ENCODE measurements at regions of chr2 and their contacts with region 1.

Region 1: GRCh38 chr2:159175182-159175581 is 111.3 kb downstream of the WDSUB1 start:
- DNase-seq: no peak
- ATAC-seq: peak; percentile 36 to 77 (median 68)
- H3K4me3 ChIP-seq: no peak overlapping the region
- H3K27ac ChIP-seq: peak overlapping the region in 7 of 10 donors; percentile 7 to 63 (median 35)
- H3K4me1 ChIP-seq: peaks cover 0 to 38% (median 13%) of the 10 kb centered on the region in 9 donors
- H3K27me3 ChIP-seq: no peaks in the 10 kb centered on the region
- CTCF ChIP-seq: peak in 1 of 9 donors; percentile 21

Region 2: DNA sequence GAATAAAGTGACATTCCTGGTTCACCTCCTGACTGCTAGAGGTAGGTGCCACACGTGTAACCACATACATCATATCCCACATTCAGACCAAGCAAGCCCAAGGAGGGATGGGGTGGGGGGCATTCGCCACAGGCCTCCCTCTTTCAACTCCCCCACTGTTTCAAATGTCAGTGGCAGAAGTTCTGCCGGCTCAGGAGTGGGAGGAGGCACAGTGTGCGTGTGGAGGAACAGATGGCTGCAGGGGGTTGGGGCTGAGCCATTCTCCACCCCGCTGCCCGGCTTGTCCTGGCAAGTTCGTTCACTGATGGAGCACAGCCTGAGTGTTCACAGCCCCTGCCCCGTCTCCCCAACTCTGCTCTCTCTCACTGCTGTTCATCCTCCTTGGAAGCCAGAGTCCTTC is 282.2 kb before region 1 on chr2:
- intact Hi-C with region 1: loop called in 1 of 10 experiments (anchors 10 kb)
- DNase-seq: no peak
- ATAC-seq: peak in 4 of 8 donors; percentile 27 to 47 (median 30)
- H3K4me3 ChIP-seq: no peak overlapping the region
- H3K27ac ChIP-seq: no peak overlapping the region
- H3K4me1 ChIP-seq: no peaks in the 10 kb centered on the region
- H3K27me3 ChIP-seq: no peaks in the 10 kb centered on the region
- CTCF ChIP-seq: no peak

Region 3: GRCh38 chr2:159137511-159138241 is 37.5 kb before region 1 on chr2:
- intact Hi-C with region 1: loop called in 1 of 10 experiments (anchors 5 kb)
- DNase-seq: peak in 1 of 2 donors; percentile 44
- ATAC-seq: peak; percentile 8 to 53 (median 40)
- H3K4me3 ChIP-seq: peak overlapping the region in 6 of 10 donors; percentile 1 to 26 (median 16)
- H3K27ac ChIP-seq: peak overlapping the region; percentile 36 to 93 (median 84)
- H3K4me1 ChIP-seq: peaks cover 4 to 89% (median 64%) of the 10 kb centered on the region in 9 donors
- H3K27me3 ChIP-seq: no peaks in the 10 kb centered on the region
- CTCF ChIP-seq: no peak

Region 4: DNA sequence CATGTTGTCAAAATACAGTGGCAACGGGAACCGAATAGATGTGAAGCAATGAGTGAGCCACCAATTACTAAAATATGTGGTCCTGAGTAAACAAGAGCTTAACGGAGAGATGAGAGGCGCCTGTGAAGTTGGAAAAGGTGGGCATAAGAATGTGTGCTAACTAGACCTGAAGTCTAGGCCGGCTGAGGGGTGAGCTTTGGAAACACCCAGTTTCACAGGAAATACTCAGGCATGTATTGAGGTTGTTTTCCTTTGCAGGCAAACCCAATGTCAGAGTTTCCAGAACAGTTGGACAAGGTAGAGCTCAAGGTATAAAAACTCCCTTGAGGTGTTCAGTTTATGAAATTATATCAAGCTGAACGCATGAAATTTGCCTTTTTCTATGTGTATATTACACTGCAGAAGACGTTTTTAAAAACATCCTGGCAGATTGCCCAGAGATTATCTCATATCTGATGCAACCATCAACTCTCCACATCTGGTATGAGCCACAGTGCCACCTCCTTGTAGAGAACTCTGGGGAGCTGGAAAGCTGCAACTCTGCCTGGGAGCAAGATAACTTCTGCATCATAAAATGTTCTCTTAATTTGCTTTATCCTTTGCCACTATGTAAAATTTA is 115.2 kb after region 1 on chr2:
- intact Hi-C with region 1: no loop called
- DNase-seq: no peak
- ATAC-seq: no peak
- H3K4me3 ChIP-seq: no peak overlapping the region
- H3K27ac ChIP-seq: no peak overlapping the region
- H3K4me1 ChIP-seq: peaks cover 0 to 22% (median 12%) of the 10 kb centered on the region in 9 donors
- H3K27me3 ChIP-seq: no peaks in the 10 kb centered on the region
- CTCF ChIP-seq: no peak

Region 5: GRCh38 chr2:159497256-159497655 is 322.1 kb after region 1 on chr2:
- intact Hi-C with region 1: no loop called
- DNase-seq: peak in 1 of 2 donors; percentile 19
- ATAC-seq: peak; percentile 74 to 99 (median 92)
- H3K4me3 ChIP-seq: no peak overlapping the region
- H3K27ac ChIP-seq: peak overlapping the region in 7 of 10 donors; percentile 8 to 80 (median 40)
- H3K4me1 ChIP-seq: peaks cover 0 to 17% (median 0%) of the 10 kb centered on the region in 9 donors
- H3K27me3 ChIP-seq: no peaks in the 10 kb centered on the region
- CTCF ChIP-seq: no peak

Measured in heart right ventricle (tissue), 16 donors.